ENCODE measurements at regions of chr12 and their contacts with region 1.

Region 1: DNA sequence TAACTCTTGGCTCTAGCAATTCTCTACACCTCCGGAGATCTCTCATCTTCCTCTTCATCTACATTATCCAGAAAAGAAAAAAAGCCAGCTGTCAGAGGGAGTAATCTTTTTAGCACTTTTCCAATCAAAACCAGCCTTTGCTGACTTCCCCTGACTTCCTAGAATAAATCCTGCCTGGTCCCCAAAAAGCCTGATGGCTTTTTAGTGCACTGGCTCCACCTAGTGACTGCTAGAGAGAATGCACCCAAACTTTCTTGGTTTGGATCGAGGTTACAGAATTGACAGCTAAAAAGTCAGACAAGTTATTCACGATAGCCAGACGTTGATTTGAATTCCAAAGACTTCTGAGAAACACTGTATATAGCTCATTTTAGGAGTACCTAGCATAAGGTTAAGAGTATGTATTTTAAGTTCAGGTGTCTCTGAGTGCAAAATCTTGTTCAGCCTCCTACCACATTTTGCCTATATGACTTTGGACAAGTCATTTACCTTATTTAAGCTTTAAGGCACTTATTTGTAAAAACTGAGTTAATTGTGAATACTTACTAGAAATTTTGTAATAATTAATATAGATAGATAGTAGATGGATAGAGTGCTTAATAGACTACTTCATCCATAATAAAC is 185.7 kb upstream of the GRIN2B start:
- DNase-seq: peak; percentile 71
- H3K4me3 ChIP-seq: no peak overlapping the region
- H3K27ac ChIP-seq: no peak overlapping the region
- H3K4me1 ChIP-seq: no peaks in the 10 kb centered on the region
- H3K27me3 ChIP-seq: peaks cover 4% of the 10 kb centered on the region
- CTCF ChIP-seq: peak; percentile 93

Region 2: GRCh38 chr12:13278249-13278787 is 888.8 kb before region 1 on chr12:
- CTCF ChIA-PET with region 1: no interaction called
- POLR2A ChIA-PET with region 1: no interaction called
- intact Hi-C with region 1: loop called (anchors 5 kb)
- DNase-seq: peak; percentile 74
- H3K4me3 ChIP-seq: no peak overlapping the region
- H3K27ac ChIP-seq: no peak overlapping the region
- H3K4me1 ChIP-seq: no peaks in the 10 kb centered on the region
- H3K27me3 ChIP-seq: peaks cover 78% of the 10 kb centered on the region
- CTCF ChIP-seq: peak; percentile 99

Region 3: DNA sequence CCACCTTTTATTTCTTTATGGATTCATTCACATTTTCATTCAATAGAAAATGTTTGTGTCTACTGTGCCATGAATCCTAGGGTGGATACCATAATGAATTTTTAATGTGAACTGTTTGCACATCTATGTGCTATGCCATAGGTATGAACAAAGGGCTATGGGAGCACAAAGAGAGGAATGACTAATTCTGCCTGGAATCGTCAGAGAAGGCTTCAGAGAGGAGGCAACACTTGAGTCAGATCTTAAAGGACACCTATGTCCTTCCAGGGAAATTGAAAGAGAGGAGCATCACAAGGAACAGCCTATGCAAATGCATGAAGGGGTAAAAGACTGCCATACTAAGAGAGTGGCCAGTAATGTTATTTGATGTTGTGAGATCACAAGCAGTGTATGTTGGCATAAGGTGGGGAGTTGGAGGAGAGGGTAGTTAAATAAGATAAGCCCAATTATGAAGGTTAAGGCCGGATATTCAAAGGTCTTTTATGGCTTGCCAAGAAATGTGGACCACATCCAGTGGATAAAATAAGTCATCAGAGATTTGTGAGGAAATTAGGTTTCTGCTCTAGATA is 432.4 kb before region 1 on chr12:
- CTCF ChIA-PET with region 1: no interaction called
- POLR2A ChIA-PET with region 1: no interaction called
- intact Hi-C with region 1: loop called (anchors 5 kb)
- DNase-seq: no peak
- H3K4me3 ChIP-seq: no peak overlapping the region
- H3K27ac ChIP-seq: no peak overlapping the region
- H3K4me1 ChIP-seq: no peaks in the 10 kb centered on the region
- H3K27me3 ChIP-seq: no peaks in the 10 kb centered on the region
- CTCF ChIP-seq: no peak

Region 4: DNA sequence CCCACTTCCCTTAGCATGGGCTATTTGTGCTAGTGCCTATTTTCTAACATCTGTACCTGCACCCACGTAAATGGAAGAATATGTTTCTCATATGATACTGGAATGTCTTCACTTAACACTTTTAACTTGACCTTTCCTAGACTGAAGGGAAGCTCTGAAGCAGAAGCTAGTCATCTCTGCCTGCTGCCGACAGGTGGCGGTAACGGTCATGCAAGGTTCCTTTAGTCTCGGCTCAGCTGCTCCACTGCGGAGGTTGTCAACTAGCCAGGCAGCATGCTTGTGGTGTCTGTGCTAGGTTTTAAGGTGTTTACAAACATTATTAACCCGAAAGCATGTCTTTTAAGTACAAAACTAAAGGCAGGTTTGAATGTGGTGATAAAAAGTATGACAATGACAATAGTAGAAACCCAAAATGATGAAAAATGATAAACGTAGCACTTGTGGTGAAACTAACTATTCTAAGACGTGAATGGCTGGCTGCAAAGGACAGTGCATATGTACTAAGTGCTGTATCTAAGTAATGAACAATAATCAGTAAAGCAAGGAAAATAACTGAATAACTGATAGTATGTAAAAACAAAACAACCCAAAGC is 302.9 kb before region 1 on chr12:
- CTCF ChIA-PET with region 1: interaction called, 6 read pairs
- POLR2A ChIA-PET with region 1: no interaction called
- intact Hi-C with region 1: loop called (anchors 1 kb)
- DNase-seq: peak; percentile 75
- H3K4me3 ChIP-seq: no peak overlapping the region
- H3K27ac ChIP-seq: no peak overlapping the region
- H3K4me1 ChIP-seq: no peaks in the 10 kb centered on the region
- H3K27me3 ChIP-seq: peaks cover 64% of the 10 kb centered on the region
- CTCF ChIP-seq: peak; percentile 94

Region 5: DNA sequence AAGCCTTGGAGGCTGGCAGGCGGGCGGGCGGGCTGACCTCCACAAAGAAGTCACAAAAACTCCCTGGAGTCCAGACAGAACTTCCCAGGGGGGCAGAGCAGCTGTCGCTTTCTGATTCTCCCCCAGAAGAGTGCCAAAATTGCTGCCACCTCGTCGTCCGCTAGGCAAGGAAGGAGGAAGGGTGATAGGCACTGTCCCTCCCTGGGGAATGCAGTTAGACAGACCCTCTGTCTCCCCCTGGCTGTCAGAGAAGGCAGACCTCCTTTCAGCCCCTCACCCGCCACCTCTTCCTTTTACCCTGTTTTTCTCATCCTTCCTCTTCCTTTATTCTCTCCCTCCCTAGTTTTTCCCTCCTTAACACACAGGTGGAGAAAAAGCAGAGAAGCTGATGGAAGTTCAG is 204.4 kb before region 1 on chr12:
- CTCF ChIA-PET with region 1: no interaction called
- POLR2A ChIA-PET with region 1: no interaction called
- intact Hi-C with region 1: loop called (anchors 10 kb)
- DNase-seq: peak; percentile 57
- H3K4me3 ChIP-seq: no peak overlapping the region
- H3K27ac ChIP-seq: no peak overlapping the region
- H3K4me1 ChIP-seq: no peaks in the 10 kb centered on the region
- H3K27me3 ChIP-seq: peaks cover 94% of the 10 kb centered on the region
- CTCF ChIP-seq: peak; percentile 66

Region 6: GRCh38 chr12:14024591-14024990 is 142.5 kb before region 1 on chr12:
- CTCF ChIA-PET with region 1: interaction called, 10 read pairs
- POLR2A ChIA-PET with region 1: no interaction called
- intact Hi-C with region 1: no loop called
- DNase-seq: no peak
- H3K4me3 ChIP-seq: no peak overlapping the region
- H3K27ac ChIP-seq: no peak overlapping the region
- H3K4me1 ChIP-seq: no peaks in the 10 kb centered on the region
- H3K27me3 ChIP-seq: peaks cover 36% of the 10 kb centered on the region
- CTCF ChIP-seq: no peak

Measured in A673 (cell line).